ENCODE measurements at regions of chr15 and their contacts with region 1.

Region 1: DNA sequence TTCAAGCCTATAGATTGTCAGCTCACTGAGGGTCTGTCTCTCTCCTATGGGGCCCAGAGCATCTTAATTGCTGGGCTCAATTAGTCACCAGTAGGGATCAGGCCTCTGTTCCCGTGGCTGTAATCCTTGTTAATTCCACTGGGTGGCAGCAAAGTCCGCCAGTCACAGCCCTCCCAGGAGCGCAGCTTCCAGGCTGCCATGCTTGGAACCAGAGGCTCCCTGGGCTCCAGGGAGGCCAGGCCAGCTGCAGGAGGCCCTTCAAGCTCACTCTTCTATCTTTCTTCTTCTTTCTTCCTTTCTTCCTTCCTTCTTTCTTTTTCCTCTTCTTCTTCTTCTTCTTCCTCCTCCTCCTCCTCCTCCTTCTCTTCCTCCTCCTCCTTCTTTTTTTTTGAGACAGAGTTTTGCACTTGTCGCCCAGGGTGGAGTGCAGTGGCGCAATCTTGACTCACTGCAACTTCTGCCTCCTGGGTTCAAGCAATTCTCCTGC is 14.4 kb downstream of the RNU5B-1 start:
- DNase-seq: peak; percentile 74 to 91 (median 86)
- H3K4me3 ChIP-seq: no peak overlapping the region
- H3K27ac ChIP-seq: no peak overlapping the region
- H3K4me1 ChIP-seq: peaks cover 0 to 10% (median 3%) of the 10 kb centered on the region in 4 experiments
- H3K27me3 ChIP-seq: peaks cover 0 to 5% (median 0%) of the 10 kb centered on the region in 5 experiments

Region 2: GRCh38 chr15:65286069-65286703 is 32.7 kb before region 1 on chr15:
- CTCF ChIA-PET with region 1: no interaction called
- POLR2A ChIA-PET with region 1: no interaction called
- DNase-seq: peak in 2 of 3 donors; percentile 38 to 53
- H3K4me3 ChIP-seq: peak overlapping the region; percentile 16 to 87 (median 69)
- H3K27ac ChIP-seq: peak overlapping the region; percentile 25 to 81
- H3K4me1 ChIP-seq: peaks cover 4 to 24% (median 18%) of the 10 kb centered on the region in 4 experiments
- H3K27me3 ChIP-seq: no peaks in the 10 kb centered on the region

Region 3: GRCh38 chr15:65364838-65365628 is 46.1 kb after region 1 on chr15:
- CTCF ChIA-PET with region 1: interaction called, 13 read pairs
- POLR2A ChIA-PET with region 1: interaction called, 5 read pairs
- DNase-seq: no peak
- H3K4me3 ChIP-seq: no peak overlapping the region
- H3K27ac ChIP-seq: no peak overlapping the region
- H3K4me1 ChIP-seq: no peaks in the 10 kb centered on the region
- H3K27me3 ChIP-seq: peaks cover 2 to 18% (median 7%) of the 10 kb centered on the region in 5 experiments

Region 4: GRCh38 chr15:65374821-65375401 is 56.0 kb after region 1 on chr15:
- CTCF ChIA-PET with region 1: interaction called, 416 read pairs
- POLR2A ChIA-PET with region 1: no interaction called
- DNase-seq: no peak
- H3K4me3 ChIP-seq: no peak overlapping the region
- H3K27ac ChIP-seq: no peak overlapping the region
- H3K4me1 ChIP-seq: peaks cover 0 to 22% (median 14%) of the 10 kb centered on the region in 4 experiments
- H3K27me3 ChIP-seq: peaks cover 19 to 74% (median 31%) of the 10 kb centered on the region in 5 experiments

Region 5: DNA sequence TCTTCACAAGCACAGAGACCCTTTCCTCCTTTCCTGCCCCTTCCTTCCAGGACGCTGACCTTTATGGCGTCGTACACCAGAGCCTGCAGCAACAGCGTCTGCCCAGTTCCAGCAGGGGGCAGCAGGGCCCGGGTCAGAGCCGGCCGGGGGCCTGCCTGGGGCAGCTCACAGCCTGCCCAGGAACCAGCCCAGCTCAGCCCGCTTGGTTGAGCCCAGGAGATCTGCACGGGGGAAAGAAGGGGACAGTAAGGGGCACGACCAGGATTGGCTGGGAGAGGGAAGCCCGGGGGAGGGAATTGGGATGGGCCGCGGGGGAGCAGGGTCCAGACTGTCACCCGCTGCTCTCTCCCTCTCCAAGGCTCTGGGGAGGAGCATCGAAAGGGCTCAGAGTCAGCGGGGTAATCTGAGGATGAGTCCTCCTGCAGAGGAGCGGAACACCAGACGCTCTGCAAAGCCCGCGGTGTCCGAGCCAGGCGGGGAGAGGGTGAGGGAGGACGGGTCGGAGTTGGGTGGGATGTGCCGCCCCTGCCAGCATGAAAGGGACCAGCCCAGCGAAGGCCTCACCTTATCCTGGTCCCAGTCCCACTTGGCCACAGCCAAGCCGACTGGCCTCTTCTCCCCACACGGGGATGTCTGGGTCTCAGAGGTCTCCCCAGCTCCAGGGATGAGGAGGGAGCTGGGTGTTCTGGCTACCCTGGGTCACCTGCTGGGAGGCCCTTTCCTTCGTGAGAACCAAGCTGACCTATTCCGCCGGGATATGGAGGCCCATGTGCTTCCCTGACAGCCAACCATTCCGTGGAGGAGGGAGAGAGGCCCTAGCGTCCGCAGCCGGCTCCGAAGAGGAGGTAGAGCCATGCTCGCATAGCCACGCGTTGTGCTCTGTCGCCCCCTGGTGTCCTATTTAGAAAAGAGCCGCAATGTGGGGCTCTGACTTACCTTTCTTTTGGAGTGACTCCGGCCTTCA is 66.3 kb after region 1 on chr15:
- CTCF ChIA-PET with region 1: interaction called, 416 read pairs
- POLR2A ChIA-PET with region 1: no interaction called
- DNase-seq: peak; percentile 75 to 87 (median 81)
- H3K4me3 ChIP-seq: peak overlapping the region; percentile 10 to 74 (median 44)
- H3K27ac ChIP-seq: no peak overlapping the region
- H3K4me1 ChIP-seq: peaks cover 0 to 12% (median 11%) of the 10 kb centered on the region in 4 experiments
- H3K27me3 ChIP-seq: peaks cover 0 to 37% (median 24%) of the 10 kb centered on the region in 5 experiments

Region 6: DNA sequence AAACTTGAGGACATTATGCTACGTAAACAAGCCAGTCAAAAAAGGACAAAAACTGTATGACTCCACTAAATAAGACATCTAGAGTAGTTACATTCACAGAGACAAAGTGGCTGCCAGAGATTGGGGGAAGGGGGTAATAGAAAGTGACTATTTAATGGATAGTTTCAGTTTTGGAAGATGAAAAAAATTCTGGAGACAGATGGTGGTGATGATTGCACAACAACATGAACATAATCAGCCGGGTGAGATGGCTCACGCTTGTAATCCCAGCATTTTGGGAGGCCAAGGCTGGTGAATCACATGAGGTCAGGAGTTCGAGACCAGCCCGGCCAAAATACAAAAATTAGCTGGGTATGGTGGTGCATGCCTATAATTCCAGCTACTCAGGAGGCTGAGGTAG is 158.0 kb after region 1 on chr15:
- CTCF ChIA-PET with region 1: no interaction called
- POLR2A ChIA-PET with region 1: no interaction called
- DNase-seq: peak in 1 of 3 donors; percentile 3
- H3K4me3 ChIP-seq: no peak overlapping the region
- H3K27ac ChIP-seq: no peak overlapping the region
- H3K4me1 ChIP-seq: no peaks in the 10 kb centered on the region
- H3K27me3 ChIP-seq: no peaks in the 10 kb centered on the region

Measured in common myeloid progenitor, CD34-positive (primary cell).